Right cardiac atrium (tissue), 5 donors: ENCODE measurements at regions of chr18 and their contacts with region 1.

Region 1: GRCh38 chr18:44325903-44326635 is 354.6 kb upstream of the SETBP1 start:
- DNase-seq: peak; percentile 44 to 79 (median 57)
- ATAC-seq: no peak
- H3K4me3 ChIP-seq: no peak overlapping the region
- H3K27ac ChIP-seq: no peak overlapping the region
- H3K4me1 ChIP-seq: no peaks in the 10 kb centered on the region
- H3K27me3 ChIP-seq: no peaks in the 10 kb centered on the region

Region 2: GRCh38 chr18:43620936-43621335 is 705.1 kb before region 1 on chr18:
- intact Hi-C with region 1: loop called in 1 of 4 experiments (anchors 10 kb)
- DNase-seq: peak in 1 of 3 donors; percentile 2
- ATAC-seq: peak; percentile 38 to 55
- H3K4me3 ChIP-seq: no peak overlapping the region
- H3K27ac ChIP-seq: no peak overlapping the region
- H3K4me1 ChIP-seq: no peaks in the 10 kb centered on the region
- H3K27me3 ChIP-seq: no peaks in the 10 kb centered on the region

Region 3: GRCh38 chr18:43793910-43794309 is 532.2 kb before region 1 on chr18:
- intact Hi-C with region 1: loop called in 1 of 4 experiments (anchors 10 kb)
- DNase-seq: no peak
- ATAC-seq: peak; percentile 70 to 75
- H3K4me3 ChIP-seq: no peak overlapping the region
- H3K27ac ChIP-seq: no peak overlapping the region
- H3K4me1 ChIP-seq: no peaks in the 10 kb centered on the region
- H3K27me3 ChIP-seq: no peaks in the 10 kb centered on the region

Region 4: GRCh38 chr18:44130376-44130942 is 195.6 kb before region 1 on chr18:
- intact Hi-C with region 1: loop called in 2 of 4 experiments (anchors 5 to 10 kb)
- DNase-seq: peak in 2 of 3 donors; percentile 13 to 21
- ATAC-seq: peak; percentile 72 to 73
- H3K4me3 ChIP-seq: no peak overlapping the region
- H3K27ac ChIP-seq: no peak overlapping the region
- H3K4me1 ChIP-seq: no peaks in the 10 kb centered on the region
- H3K27me3 ChIP-seq: no peaks in the 10 kb centered on the region

Region 5: GRCh38 chr18:44178476-44178875 is 147.6 kb before region 1 on chr18:
- intact Hi-C with region 1: no loop called
- DNase-seq: peak in 2 of 3 donors; percentile 41 to 69
- ATAC-seq: no peak
- H3K4me3 ChIP-seq: no peak overlapping the region
- H3K27ac ChIP-seq: no peak overlapping the region
- H3K4me1 ChIP-seq: no peaks in the 10 kb centered on the region
- H3K27me3 ChIP-seq: no peaks in the 10 kb centered on the region

Region 6: GRCh38 chr18:44411277-44411905 is 85.3 kb after region 1 on chr18:
- intact Hi-C with region 1: no loop called
- DNase-seq: no peak
- ATAC-seq: no peak
- H3K4me3 ChIP-seq: no peak overlapping the region
- H3K27ac ChIP-seq: no peak overlapping the region
- H3K4me1 ChIP-seq: no peaks in the 10 kb centered on the region
- H3K27me3 ChIP-seq: no peaks in the 10 kb centered on the region